Breast epithelium (tissue), 4 donors: ENCODE measurements at regions of chr3 and their contacts with region 1.

Region 1: GRCh38 chr3:54897028-54897711 is 30.7 kb downstream of the LRTM1 start:
- DNase-seq: no peak
- H3K4me3 ChIP-seq: no peak overlapping the region
- H3K27ac ChIP-seq: no peak overlapping the region
- H3K4me1 ChIP-seq: no peaks in the 10 kb centered on the region
- H3K27me3 ChIP-seq: no peaks in the 10 kb centered on the region
- CTCF ChIP-seq: no peak
- POLR2A ChIP-seq: no peak

Region 2: GRCh38 chr3:53850895-53851294 is 1046.3 kb before region 1 on chr3:
- intact Hi-C with region 1: loop called (anchors 5 kb)
- DNase-seq: no peak
- H3K4me3 ChIP-seq: no peak overlapping the region
- H3K27ac ChIP-seq: no peak overlapping the region
- H3K4me1 ChIP-seq: no peaks in the 10 kb centered on the region
- H3K27me3 ChIP-seq: no peaks in the 10 kb centered on the region
- CTCF ChIP-seq: no peak
- POLR2A ChIP-seq: no peak

Region 3: GRCh38 chr3:55333923-55334322 is 436.8 kb after region 1 on chr3:
- intact Hi-C with region 1: no loop called
- DNase-seq: no peak
- H3K4me3 ChIP-seq: no peak overlapping the region
- H3K27ac ChIP-seq: no peak overlapping the region
- H3K4me1 ChIP-seq: no peaks in the 10 kb centered on the region
- H3K27me3 ChIP-seq: no peaks in the 10 kb centered on the region
- CTCF ChIP-seq: no peak
- POLR2A ChIP-seq: no peak